MCF 10A (cell line): ENCODE measurements at regions of chr20 and their contacts with region 1.

Region 1: GRCh38 chr20:2849529-2849928 is 9.0 kb downstream of the VPS16 start:
- DNase-seq: no peak
- H3K4me3 Mint-ChIP-seq: no peak overlapping the region
- H3K27ac Mint-ChIP-seq: no peak overlapping the region
- H3K4me1 Mint-ChIP-seq: peaks cover 3% of the 10 kb centered on the region
- H3K27me3 Mint-ChIP-seq: no peaks in the 10 kb centered on the region
- CTCF ChIP-seq: no peak

Region 2: DNA sequence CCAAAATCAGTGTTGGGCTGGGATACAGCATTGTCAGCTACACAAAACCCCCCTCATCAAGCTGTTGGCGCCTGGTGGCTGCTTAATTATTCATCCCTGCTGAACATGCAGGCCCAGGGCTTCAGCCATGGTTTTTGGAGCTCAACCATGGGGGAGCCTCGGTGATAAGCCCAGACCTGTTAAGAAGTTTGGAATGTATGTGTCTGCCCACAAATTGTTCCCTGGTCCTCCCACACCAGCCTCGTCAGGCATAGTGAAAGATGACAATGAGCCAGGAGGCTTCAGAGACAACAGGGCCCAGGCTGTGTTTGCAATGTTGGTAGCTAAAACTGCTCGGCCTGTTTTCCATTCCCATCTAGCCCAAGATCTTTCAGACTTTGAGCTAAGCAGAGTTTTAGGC is 989.1 kb before region 1 on chr20:
- CTCF ChIA-PET with region 1: no interaction called
- POLR2A ChIA-PET with region 1: no interaction called
- intact Hi-C with region 1: no loop called
- DNase-seq: peak; percentile 33
- H3K4me3 Mint-ChIP-seq: no peak overlapping the region
- H3K27ac Mint-ChIP-seq: no peak overlapping the region
- H3K4me1 Mint-ChIP-seq: peaks cover 13% of the 10 kb centered on the region
- H3K27me3 Mint-ChIP-seq: no peaks in the 10 kb centered on the region
- CTCF ChIP-seq: no peak

Region 3: GRCh38 chr20:2713285-2713684 is 136.2 kb before region 1 on chr20:
- CTCF ChIA-PET with region 1: interaction called, 3 read pairs
- POLR2A ChIA-PET with region 1: no interaction called
- intact Hi-C with region 1: loop called (anchors 1 kb)
- DNase-seq: peak; percentile 18
- H3K4me3 Mint-ChIP-seq: no peak overlapping the region
- H3K27ac Mint-ChIP-seq: no peak overlapping the region
- H3K4me1 Mint-ChIP-seq: no peaks in the 10 kb centered on the region
- H3K27me3 Mint-ChIP-seq: peaks cover 19% of the 10 kb centered on the region
- CTCF ChIP-seq: peak; percentile 22

Region 4: DNA sequence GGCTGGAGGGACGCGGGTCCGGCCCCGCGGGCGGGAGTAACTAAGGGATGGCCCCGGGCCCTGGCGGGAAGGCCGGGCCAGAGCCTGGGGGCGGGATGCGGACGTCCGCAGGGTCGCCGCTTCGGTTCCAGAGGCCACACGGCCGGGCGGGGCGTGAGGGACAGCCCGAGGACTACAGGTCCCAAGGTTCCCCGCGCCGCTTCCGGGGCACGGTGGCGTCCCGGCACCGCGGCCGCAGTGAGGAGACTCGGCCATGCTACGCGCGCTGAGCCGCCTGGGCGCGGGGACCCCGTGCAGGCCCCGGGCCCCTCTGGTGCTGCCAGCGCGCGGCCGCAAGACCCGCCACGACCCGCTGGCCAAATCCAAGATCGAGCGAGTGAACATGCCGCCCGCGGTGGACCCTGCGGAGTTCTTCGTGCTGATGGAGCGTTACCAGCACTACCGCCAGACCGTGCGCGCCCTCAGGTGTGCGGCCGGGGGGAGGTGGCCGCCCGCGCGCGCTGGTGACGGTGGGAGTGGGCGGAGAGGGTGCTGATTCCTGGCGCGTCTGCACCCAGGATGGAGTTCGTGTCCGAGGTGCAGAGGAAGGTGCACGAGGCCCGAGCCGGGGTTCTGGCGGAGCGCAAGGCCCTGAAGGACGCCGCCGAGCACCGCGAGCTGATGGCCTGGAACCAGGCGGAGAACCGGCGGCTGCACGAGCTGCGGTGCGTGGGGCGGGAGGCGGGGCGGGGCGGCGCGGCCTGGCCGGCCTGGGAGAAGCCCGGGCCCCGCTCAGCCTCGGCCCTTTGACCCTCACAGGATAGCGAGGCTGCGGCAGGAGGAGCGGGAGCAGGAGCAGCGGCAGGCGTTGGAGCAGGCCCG is 196.5 kb after region 1 on chr20 and contains the start of gene MRPS26:
- CTCF ChIA-PET with region 1: no interaction called
- POLR2A ChIA-PET with region 1: no interaction called
- intact Hi-C with region 1: no loop called
- DNase-seq: peak; percentile 87
- H3K4me3 Mint-ChIP-seq: peak within 1 kb of the TSS; percentile 95
- H3K27ac Mint-ChIP-seq: peak within 1 kb of the TSS; percentile 83
- H3K4me1 Mint-ChIP-seq: peaks cover 12% of the 10 kb centered on the region
- H3K27me3 Mint-ChIP-seq: no peaks in the 10 kb centered on the region
- CTCF ChIP-seq: no peak
- total RNA-seq, gene MRPS26: 62.6 and 68.4 TPM in 2 replicates